ENCODE measurements at regions of chr6 and their contacts with region 1.

Region 1: DNA sequence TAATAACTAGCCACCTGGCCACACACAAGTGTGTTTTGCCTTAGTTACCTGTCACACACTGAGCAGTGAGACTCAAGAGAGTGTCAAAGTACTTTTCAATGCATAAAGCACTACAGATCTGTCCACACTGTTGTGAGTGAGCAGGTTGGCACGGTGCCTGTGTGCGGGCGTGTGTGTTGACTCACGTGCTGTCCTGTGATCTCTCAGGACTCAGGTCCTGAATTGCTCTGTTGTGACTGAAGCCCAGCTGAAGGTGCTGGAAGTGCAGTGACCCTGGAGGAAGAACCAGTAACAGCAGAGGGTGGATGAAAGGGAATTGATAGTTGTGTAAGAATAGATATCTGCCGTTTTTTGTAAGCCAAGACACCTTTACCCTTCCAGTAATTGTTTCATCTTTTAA is 18.3 kb downstream of the SLC16A10 start:
- DNase-seq: peak; percentile 71
- H3K4me3 ChIP-seq: no peak overlapping the region
- H3K27ac ChIP-seq: no peak overlapping the region
- H3K4me1 ChIP-seq: peaks cover 9% of the 10 kb centered on the region
- H3K27me3 ChIP-seq: peaks cover 5% of the 10 kb centered on the region
- CTCF ChIP-seq: no peak

Region 2: GRCh38 chr6:111200350-111201243 is 95.0 kb after region 1 on chr6:
- CTCF ChIA-PET with region 1: no interaction called
- dilution Hi-C with region 1: loop called (anchors 5 kb)
- in situ Hi-C with region 1: no loop called
- intact Hi-C with region 1: no loop called
- DNase-seq: no peak
- H3K4me3 ChIP-seq: no peak overlapping the region
- H3K27ac ChIP-seq: no peak overlapping the region
- H3K4me1 ChIP-seq: no peaks in the 10 kb centered on the region
- H3K27me3 ChIP-seq: peaks cover 3% of the 10 kb centered on the region
- CTCF ChIP-seq: no peak

Region 3: GRCh38 chr6:111220383-111221031 is 114.9 kb after region 1 on chr6:
- CTCF ChIA-PET with region 1: no interaction called
- dilution Hi-C with region 1: no loop called
- in situ Hi-C with region 1: no loop called
- intact Hi-C with region 1: no loop called
- DNase-seq: no peak
- H3K4me3 ChIP-seq: no peak overlapping the region
- H3K27ac ChIP-seq: no peak overlapping the region
- H3K4me1 ChIP-seq: no peaks in the 10 kb centered on the region
- H3K27me3 ChIP-seq: peaks cover 3% of the 10 kb centered on the region
- CTCF ChIP-seq: no peak

Measured in mammary epithelial cell (primary cell).